ENCODE measurements at regions of chr14 and their contacts with region 1.

Region 1: DNA sequence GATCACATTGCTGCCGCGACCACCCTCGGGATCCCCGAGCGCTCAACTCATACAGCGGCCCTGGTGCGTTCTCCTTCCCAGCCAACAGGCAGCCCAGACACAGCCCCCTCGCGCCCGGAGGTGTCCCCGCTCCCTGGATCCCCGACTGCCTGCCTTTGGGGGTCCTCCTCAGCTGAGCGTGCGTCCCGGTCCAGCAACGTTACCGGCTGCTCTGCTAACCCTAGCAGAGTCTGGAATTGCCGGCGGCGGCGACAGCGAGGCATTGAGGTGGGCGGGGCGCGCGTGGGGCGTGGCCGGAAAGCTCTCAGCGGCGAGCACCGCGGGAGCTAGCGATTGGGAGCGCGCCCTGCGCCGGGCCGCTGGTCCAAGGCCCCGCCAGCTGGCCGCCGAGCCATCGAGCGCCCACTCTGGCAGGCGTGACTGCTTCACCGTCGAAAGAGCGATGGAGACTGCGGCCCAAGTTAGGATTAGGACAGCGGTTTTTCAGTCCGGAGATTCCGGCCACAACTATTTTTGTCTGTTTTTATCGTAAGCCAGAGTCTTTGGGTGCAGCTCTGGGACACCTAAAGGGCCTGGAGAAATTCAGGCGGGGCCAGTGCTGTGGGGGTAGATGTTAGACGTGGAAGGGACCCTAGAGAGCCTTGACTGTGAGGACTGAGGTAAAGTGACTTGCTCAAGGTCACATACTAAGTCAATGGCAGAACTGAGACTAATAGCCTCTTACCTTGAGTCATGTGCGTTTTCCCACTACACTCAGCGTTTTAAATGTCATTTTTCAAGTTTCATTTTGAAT is at the start of gene HEATR5A:
- DNase-seq: peak; percentile 92
- ATAC-seq: peak; percentile 94
- H3K4me3 Mint-ChIP-seq: peak within 1 kb of the TSS; percentile 92
- H3K27ac Mint-ChIP-seq: peak within 1 kb of the TSS; percentile 90
- H3K4me1 Mint-ChIP-seq: peaks cover 18% of the 10 kb centered on the region
- H3K27me3 Mint-ChIP-seq: no peaks in the 10 kb centered on the region
- CTCF ChIP-seq: no peak
- total RNA-seq, gene HEATR5A: 12.7 to 15.7 TPM

Region 2: GRCh38 chr14:31435276-31435675 is 14.8 kb after region 1 on chr14:
- CTCF ChIA-PET with region 1: interaction called, 11 read pairs
- POLR2A ChIA-PET with region 1: interaction called, 4 read pairs
- intact Hi-C with region 1: no loop called
- DNase-seq: no peak
- ATAC-seq: no peak
- H3K4me3 Mint-ChIP-seq: no peak overlapping the region
- H3K27ac Mint-ChIP-seq: no peak overlapping the region
- H3K4me1 Mint-ChIP-seq: peaks cover 4% of the 10 kb centered on the region
- H3K27me3 Mint-ChIP-seq: no peaks in the 10 kb centered on the region
- CTCF ChIP-seq: no peak

Region 3: DNA sequence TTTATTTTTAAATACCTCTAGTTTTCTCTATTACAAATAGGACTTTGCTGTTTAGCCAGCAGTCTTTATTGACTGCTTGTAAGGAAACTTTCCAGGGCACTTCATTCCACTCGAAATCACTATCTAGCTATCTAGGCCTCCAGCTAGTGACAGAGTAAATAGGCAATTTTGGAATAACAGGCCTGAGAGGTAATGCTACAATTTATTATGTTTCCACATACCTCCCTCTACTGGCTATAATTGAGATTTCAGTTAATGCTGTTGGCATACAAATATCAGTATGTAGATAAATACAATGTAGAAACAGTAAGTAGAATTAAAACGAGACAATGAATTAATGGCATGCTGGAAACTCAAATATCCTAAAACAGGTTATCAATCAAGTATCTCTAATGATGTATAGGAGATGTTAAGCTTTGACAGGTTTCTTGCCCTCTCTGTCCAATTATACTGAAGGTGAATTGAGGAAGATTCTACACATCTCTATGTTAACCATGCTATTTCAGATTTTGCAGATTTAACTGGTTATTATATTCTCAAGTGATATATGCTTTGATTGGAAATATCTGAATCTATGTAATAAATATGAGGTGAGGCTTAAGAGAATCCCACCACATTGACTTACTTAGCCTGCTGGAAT is 29.6 kb after region 1 on chr14:
- CTCF ChIA-PET with region 1: interaction called, 21 read pairs
- POLR2A ChIA-PET with region 1: no interaction called
- intact Hi-C with region 1: loop called (anchors 5 kb)
- DNase-seq: no peak
- ATAC-seq: peak; percentile 65
- H3K4me3 Mint-ChIP-seq: no peak overlapping the region
- H3K27ac Mint-ChIP-seq: no peak overlapping the region
- H3K4me1 Mint-ChIP-seq: peaks cover 8% of the 10 kb centered on the region
- H3K27me3 Mint-ChIP-seq: no peaks in the 10 kb centered on the region
- CTCF ChIP-seq: peak; percentile 62

Region 4: DNA sequence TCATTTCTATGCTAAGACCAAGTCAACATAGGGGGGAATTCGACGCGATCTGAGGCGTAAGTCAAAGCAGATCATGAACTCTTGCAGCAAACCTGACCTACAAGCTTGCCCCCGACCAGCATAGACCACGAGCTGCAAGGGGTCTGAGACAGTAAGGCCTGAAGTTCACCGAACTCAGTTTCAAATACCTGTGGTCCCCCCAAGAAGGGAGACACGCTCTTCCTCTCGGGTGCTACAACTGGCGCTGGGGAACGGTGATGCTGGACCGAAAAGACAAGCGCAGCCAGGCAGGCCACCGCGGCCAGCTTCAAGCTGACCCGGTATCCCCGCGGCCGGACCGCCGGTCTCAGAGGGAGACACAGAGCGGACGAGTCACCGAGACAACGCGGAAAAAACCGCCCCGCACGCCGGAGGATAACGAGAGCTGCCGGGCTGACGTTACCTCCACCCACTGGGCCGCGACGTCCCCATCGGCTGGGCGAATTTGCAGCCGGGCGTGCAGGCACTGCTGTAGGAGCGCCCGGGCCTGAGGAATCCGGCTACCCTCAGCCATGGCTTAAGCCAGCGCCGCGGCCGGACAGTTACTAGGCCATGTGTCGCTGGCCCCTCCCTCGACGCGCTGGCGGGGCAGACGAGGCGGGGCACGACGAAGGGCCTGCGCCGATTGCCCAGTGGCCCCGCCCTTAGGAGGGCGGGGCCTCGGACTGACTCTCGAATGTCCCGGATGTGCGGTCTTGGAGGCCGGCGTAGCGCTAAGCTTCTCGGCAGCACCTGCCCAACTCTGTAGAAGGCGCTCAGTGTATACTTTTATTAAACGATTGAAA is 36.5 kb after region 1 on chr14 and contains the start of gene DTD2:
- CTCF ChIA-PET with region 1: interaction called, 19 read pairs
- POLR2A ChIA-PET with region 1: interaction called, 16 read pairs
- intact Hi-C with region 1: loop called (anchors 5 kb)
- DNase-seq: peak; percentile 94
- ATAC-seq: peak; percentile 99
- H3K4me3 Mint-ChIP-seq: peak within 1 kb of the TSS; percentile 89
- H3K27ac Mint-ChIP-seq: peak within 1 kb of the TSS; percentile 94
- H3K4me1 Mint-ChIP-seq: peaks cover 24% of the 10 kb centered on the region
- H3K27me3 Mint-ChIP-seq: no peaks in the 10 kb centered on the region
- CTCF ChIP-seq: no peak
- total RNA-seq, gene DTD2: 25.4 to 25.6 TPM

Measured in activated CD8-positive, alpha-beta T cell treated with anti-CD3 and anti-CD28 coated beads for 36 hours (primary cell).